ENCODE measurements at regions of chr14 and their contacts with region 1.

Region 1: GRCh38 chr14:74905375-74906142 is 17.5 kb downstream of the RPS6KL1 start:
- DNase-seq: peak; percentile 70 to 89 (median 78)
- ATAC-seq: peak; percentile 77
- H3K4me3 ChIP-seq: no peak overlapping the region
- H3K4me3 Mint-ChIP-seq: no peak overlapping the region
- H3K27ac ChIP-seq: no peak overlapping the region
- H3K27ac Mint-ChIP-seq: peak overlapping the region; percentile 73
- H3K4me1 ChIP-seq: peaks cover 13% of the 10 kb centered on the region
- H3K4me1 Mint-ChIP-seq: peaks cover 5% of the 10 kb centered on the region
- H3K27me3 ChIP-seq: no peaks in the 10 kb centered on the region
- H3K27me3 Mint-ChIP-seq: no peaks in the 10 kb centered on the region
- CTCF ChIP-seq: peak; percentile 90

Region 2: DNA sequence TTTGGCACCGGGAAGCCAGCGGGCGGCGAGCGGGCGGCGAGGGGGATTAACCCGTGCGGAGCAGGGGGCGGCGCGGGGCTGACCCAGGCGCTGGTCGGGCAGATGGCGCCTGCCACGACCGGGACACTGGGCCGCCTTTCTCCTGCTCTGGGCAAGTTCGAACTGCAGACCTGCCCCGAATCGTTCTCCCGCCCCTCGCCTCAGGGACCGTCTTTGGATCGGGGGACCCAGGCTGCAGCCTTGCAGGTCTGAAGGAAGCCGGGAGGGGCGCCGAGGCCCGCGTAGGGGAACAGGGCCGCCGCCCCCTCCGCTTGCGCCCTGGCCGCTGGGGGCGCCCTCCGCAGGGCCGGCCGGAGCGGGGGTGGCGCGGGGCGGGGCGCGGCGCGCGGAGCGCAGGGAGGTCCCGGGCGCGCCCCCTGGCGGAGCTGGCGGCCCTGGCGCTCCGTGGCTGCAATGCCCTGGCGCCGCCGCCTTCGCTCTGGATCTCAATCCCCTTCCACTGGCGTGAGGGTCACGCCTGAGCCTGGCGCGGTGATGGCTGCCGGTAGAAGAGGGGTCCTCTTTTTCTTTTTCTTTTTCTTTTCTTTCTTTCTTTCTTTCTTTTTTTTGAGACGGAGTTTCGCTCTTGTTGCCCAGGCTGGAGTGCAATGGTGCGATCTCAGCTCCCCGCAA is 293.1 kb before region 1 on chr14:
- CTCF ChIA-PET with region 1: interaction called, 5 read pairs
- POLR2A ChIA-PET with region 1: no interaction called
- intact Hi-C with region 1: loop called (anchors 1 to 2 kb)
- DNase-seq: peak; percentile 65 to 95 (median 81)
- ATAC-seq: peak; percentile 79
- H3K4me3 ChIP-seq: peak overlapping the region; percentile 65
- H3K4me3 Mint-ChIP-seq: peak overlapping the region; percentile 79
- H3K27ac ChIP-seq: no peak overlapping the region
- H3K27ac Mint-ChIP-seq: no peak overlapping the region
- H3K4me1 ChIP-seq: peaks cover 54% of the 10 kb centered on the region
- H3K4me1 Mint-ChIP-seq: peaks cover 29% of the 10 kb centered on the region
- H3K27me3 ChIP-seq: no peaks in the 10 kb centered on the region
- H3K27me3 Mint-ChIP-seq: peaks cover 9% of the 10 kb centered on the region
- CTCF ChIP-seq: peak; percentile 52

Region 3: DNA sequence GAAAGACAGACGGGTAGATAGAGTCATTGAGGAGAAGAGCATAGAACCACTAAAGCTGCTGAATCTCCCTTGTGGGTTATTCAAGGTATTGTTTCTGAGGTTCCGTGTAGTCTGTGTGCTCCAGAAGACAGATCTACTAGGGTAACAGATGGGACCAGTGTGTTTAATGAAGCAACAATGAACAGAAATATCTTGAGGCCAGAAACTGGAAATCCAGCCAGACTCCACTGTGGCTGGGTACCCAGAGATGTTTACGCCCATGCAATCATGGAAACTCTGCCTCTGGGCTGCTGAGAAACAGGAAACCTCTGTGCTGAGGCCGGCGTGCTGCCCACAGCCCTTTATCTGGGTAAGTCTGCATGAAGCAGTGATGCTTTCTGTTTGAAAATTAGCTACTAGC is 37.9 kb before region 1 on chr14:
- CTCF ChIA-PET with region 1: interaction called, 160 read pairs
- POLR2A ChIA-PET with region 1: interaction called, 43 read pairs
- intact Hi-C with region 1: no loop called
- DNase-seq: peak in 13 of 14 experiments; percentile 9 to 72 (median 36)
- ATAC-seq: peak; percentile 84
- H3K4me3 ChIP-seq: no peak overlapping the region
- H3K4me3 Mint-ChIP-seq: peak overlapping the region; percentile 8
- H3K27ac ChIP-seq: no peak overlapping the region
- H3K27ac Mint-ChIP-seq: peak overlapping the region; percentile 28
- H3K4me1 ChIP-seq: peaks cover 16% of the 10 kb centered on the region
- H3K4me1 Mint-ChIP-seq: peaks cover 25% of the 10 kb centered on the region
- H3K27me3 ChIP-seq: no peaks in the 10 kb centered on the region
- H3K27me3 Mint-ChIP-seq: no peaks in the 10 kb centered on the region
- CTCF ChIP-seq: no peak

Region 4: DNA sequence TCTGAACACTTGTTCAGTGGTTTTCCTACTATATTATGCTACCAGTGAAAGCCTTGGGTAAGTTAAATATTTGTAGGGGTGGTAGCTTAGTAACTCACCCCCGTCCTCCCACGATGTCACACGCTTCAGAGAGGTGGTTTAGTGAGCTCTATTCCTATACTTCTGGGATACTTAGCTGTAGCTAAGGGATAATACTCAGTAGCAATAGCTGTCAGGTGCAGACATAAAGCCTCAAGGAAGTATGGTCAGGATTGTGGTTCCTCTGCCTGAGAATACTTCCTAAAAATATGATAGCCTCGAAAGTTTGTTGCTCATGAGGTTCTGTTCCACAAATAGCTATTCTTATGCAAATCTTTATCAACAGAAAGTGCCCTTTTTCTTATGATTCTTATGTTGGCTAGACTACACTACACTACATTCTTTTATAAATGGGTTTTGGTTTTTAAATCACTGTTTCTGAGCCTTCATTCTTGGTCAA is 11.9 kb before region 1 on chr14:
- CTCF ChIA-PET with region 1: interaction called, 10 read pairs
- POLR2A ChIA-PET with region 1: interaction called, 3 read pairs
- intact Hi-C with region 1: no loop called
- DNase-seq: no peak
- ATAC-seq: no peak
- H3K4me3 ChIP-seq: no peak overlapping the region
- H3K4me3 Mint-ChIP-seq: no peak overlapping the region
- H3K27ac ChIP-seq: no peak overlapping the region
- H3K27ac Mint-ChIP-seq: peak overlapping the region; percentile 3
- H3K4me1 ChIP-seq: peaks cover 1% of the 10 kb centered on the region
- H3K4me1 Mint-ChIP-seq: peaks cover 8% of the 10 kb centered on the region
- H3K27me3 ChIP-seq: no peaks in the 10 kb centered on the region
- H3K27me3 Mint-ChIP-seq: no peaks in the 10 kb centered on the region
- CTCF ChIP-seq: no peak

Region 5: GRCh38 chr14:75022655-75023054 is 117.1 kb after region 1 on chr14:
- CTCF ChIA-PET with region 1: no interaction called
- POLR2A ChIA-PET with region 1: no interaction called
- intact Hi-C with region 1: no loop called
- DNase-seq: peak in 3 of 14 experiments; percentile 6 to 24 (median 16)
- ATAC-seq: no peak
- H3K4me3 ChIP-seq: no peak overlapping the region
- H3K4me3 Mint-ChIP-seq: no peak overlapping the region
- H3K27ac ChIP-seq: no peak overlapping the region
- H3K27ac Mint-ChIP-seq: no peak overlapping the region
- H3K4me1 ChIP-seq: no peaks in the 10 kb centered on the region
- H3K4me1 Mint-ChIP-seq: no peaks in the 10 kb centered on the region
- H3K27me3 ChIP-seq: no peaks in the 10 kb centered on the region
- H3K27me3 Mint-ChIP-seq: no peaks in the 10 kb centered on the region
- CTCF ChIP-seq: no peak

Measured in CD4-positive, alpha-beta T cell (primary cell).